Left cardiac atrium (tissue), 4 donors: ENCODE measurements at regions of chr1 and their contacts with region 1.

Region 1: GRCh38 chr1:54406339-54407153 is at the start of gene SSBP3:
- DNase-seq: peak; percentile 93
- ATAC-seq: peak; percentile 92 to 95
- total RNA-seq, gene SSBP3: 23.9 to 45.1 TPM

Region 2: GRCh38 chr1:54052934-54053744 is 353.4 kb before region 1 on chr1 and contains the starts of genes TCEANC2 and TMEM59:
- intact Hi-C with region 1: loop called in 1 of 2 experiments (anchors 10 kb)
- DNase-seq: peak; percentile 98
- ATAC-seq: peak; percentile 97
- total RNA-seq, gene TCEANC2: 2.6 to 5.3 TPM
- total RNA-seq, gene TMEM59: 324 to 335 TPM

Region 3: GRCh38 chr1:54227091-54227602 is 179.4 kb before region 1 on chr1:
- intact Hi-C with region 1: loop called in 1 of 2 experiments (anchors 10 kb)
- DNase-seq: no peak
- ATAC-seq: peak in 1 of 2 donors; percentile 43

Region 4: DNA sequence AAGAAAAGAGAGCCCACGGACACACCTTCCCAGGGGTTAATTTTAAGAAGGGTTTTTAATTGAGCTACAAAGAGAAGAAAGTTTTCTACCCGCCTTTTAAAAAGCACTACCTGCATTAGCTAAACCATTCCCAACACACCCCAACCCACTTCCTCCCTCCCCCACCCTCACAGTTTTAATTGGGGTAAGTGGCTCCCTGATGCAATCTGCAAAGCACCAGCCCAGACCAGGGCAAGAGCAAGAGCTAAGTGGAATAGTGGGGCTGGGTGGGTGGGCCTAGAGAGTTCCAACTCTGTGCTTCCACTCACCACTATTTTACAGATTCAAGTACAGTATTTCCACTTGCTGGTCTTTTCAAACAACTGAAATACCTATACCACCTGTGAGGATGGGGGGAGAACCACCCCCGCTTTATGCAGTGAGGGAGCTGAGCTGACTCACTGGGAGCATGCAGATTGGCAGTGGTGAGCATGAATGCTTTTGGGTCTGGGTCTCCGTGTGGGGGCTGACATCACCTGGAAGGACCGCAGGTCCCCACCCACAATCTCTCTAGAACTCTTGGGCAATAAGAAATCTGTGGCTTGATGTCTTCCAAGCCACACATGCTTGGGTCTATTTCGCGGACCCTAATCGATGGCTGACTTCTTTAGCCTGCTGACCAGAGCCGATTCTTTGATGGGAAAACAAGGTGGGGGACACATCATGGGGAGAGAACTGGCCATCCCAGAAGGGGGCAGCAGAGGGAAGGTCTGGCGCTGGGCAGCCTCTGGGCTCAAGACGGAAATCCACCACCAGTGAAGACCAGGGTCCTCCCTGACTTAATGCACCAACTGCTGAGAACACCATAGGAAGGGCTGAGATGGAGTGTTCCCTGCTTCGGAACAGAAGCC is 95.9 kb before region 1 on chr1:
- intact Hi-C with region 1: loop called in 1 of 2 experiments (anchors 1 kb)
- DNase-seq: peak; percentile 53
- ATAC-seq: peak; percentile 15 to 30

Region 5: DNA sequence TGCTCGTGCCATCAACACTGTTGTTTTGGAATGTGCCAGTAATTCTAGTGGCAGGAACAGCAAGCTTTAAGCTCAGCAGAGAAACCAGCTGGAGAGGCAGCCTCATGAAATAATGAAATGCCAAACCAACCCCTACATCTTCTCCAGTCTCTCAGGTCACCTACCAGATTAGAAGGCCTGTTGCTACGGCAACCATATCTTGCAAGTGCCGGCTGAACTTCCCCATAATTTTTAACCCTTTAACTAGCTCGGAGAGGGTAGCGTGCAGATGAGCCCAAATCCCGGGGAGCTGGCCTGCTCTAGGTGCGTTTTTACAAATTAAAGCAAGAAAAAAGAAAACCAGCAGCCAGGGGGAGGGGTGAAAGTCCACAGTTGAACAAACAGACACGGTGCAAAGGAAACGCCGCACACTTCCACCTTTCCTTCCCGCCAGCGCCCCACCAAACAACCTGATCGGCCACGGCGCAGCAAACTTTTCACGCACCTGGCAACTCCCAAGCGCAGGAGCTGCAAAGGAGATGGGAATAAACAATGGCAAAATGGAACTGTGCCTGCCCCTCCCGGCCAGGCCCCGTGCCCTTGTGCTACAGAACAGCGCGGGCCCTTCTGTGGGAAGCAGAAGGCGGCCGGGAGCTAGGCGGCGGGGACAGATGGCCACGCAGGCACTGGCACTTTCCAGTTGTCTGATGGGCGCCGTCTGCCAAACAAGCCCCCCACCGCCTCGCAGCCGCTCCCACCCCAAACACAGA is 50.4 kb before region 1 on chr1:
- intact Hi-C with region 1: loop called in 1 of 2 experiments (anchors 5 kb)
- DNase-seq: no peak
- ATAC-seq: no peak

Region 6: DNA sequence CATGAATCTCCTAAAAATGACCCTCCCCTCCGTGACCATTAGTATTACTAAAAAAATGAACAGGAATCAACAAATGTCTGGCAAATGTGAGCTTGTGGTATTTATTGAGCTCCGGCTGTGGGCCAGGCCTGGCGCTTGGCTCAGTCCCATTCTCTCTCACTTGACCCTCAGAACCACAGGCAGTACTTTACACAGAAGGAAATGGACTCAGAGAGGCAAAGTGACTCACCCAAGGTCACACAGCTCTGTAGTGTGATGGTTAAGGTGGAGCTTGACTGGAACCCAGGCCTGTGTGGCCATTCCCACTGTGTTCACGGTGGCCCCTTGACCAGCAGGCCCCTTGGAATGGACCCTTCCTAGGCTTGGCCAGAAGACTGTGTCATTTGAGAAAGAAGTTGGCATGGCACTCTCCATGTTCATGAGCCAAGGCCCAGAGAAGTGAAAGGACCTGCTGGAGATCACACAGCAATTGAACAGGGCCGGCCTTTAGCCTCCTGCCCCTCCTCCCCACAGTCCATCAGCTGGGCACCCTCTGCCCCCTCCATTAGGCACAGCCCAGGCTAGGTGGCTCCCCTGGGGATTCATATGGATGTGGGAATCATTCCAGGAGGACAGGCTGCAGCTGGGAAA is 184.7 kb after region 1 on chr1:
- intact Hi-C with region 1: no loop called
- DNase-seq: no peak
- ATAC-seq: no peak